Aorta (tissue), 5 donors: ENCODE measurements at regions of chr22 and their contacts with region 1.

Region 1: DNA sequence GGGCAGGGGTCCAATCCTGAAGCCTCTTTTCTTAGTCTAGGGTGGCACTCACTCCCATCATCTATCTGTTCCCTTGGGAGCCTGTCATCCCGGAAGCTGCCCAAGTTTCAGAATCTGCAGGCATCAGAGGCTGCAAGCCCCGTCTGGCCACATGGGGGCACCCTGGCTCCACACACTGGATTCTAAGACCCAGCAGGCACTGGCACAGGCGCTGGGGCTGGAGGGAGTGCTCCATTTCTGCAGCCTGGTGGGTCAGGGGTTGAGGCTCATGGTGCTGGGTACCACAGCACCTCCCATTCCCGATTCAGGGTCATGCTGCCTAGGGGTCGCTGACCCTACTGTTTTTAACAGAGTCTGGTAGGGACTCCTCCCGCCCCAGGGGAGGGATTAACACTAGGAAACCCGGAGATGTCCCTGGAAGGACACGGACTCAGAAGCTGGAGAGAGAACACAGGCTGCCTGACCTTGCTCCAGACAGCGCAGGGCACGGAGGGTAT is 243.9 kb upstream of the SYN3 start:
- DNase-seq: peak; percentile 84 to 93
- ATAC-seq: peak; percentile 82
- H3K4me3 ChIP-seq: no peak overlapping the region
- H3K27ac ChIP-seq: no peak overlapping the region
- H3K4me1 ChIP-seq: no peaks in the 10 kb centered on the region
- H3K27me3 ChIP-seq: no peaks in the 10 kb centered on the region

Region 2: GRCh38 chr22:33529424-33530113 is 227.5 kb after region 1 on chr22:
- intact Hi-C with region 1: loop called in 1 of 2 experiments (anchors 5 kb)
- DNase-seq: no peak
- ATAC-seq: no peak
- H3K4me3 ChIP-seq: no peak overlapping the region
- H3K27ac ChIP-seq: no peak overlapping the region
- H3K4me1 ChIP-seq: peaks cover 0 to 5% of the 10 kb centered on the region in 2 donors
- H3K27me3 ChIP-seq: no peaks in the 10 kb centered on the region

Region 3: DNA sequence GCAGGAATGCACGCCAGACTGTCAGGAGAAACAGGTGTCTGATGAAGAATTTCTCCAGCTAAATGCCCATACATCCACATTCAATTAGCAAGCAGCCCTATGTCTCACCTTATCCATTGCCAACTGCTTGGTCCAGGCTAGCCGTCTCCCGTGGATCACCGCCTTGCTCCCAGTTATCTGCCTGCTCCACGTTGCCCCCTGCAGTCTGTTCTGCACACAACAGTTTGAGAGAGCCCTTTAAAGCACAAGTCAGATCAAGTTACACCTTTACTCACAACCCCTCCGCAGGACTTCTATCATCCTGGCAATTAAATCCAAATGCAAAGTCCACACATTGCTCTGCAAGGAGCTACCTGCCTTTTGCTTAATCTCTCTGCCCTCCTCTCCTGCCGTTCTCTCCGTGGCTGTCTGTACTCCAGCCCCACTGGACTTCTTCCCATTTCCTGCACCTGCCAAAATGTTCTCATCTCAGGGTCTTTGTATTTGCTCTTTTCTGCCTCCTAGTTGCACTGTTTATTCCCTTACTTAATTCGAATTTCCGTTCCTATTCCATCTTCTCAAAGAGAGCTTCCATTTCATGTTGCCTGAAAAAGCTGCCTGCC is 803.5 kb after region 1 on chr22:
- intact Hi-C with region 1: loop called (anchors 5 kb)
- DNase-seq: peak; percentile 55 to 76
- ATAC-seq: no peak
- H3K4me3 ChIP-seq: no peak overlapping the region
- H3K27ac ChIP-seq: no peak overlapping the region
- H3K4me1 ChIP-seq: no peaks in the 10 kb centered on the region
- H3K27me3 ChIP-seq: no peaks in the 10 kb centered on the region

Region 4: GRCh38 chr22:34111210-34111824 is 809.2 kb after region 1 on chr22:
- intact Hi-C with region 1: loop called (anchors 5 kb)
- DNase-seq: no peak
- ATAC-seq: no peak
- H3K4me3 ChIP-seq: no peak overlapping the region
- H3K27ac ChIP-seq: no peak overlapping the region
- H3K4me1 ChIP-seq: no peaks in the 10 kb centered on the region
- H3K27me3 ChIP-seq: no peaks in the 10 kb centered on the region